Panc1 (cell line): ENCODE measurements at regions of chr2 and their contacts with region 1.

Region 1: DNA sequence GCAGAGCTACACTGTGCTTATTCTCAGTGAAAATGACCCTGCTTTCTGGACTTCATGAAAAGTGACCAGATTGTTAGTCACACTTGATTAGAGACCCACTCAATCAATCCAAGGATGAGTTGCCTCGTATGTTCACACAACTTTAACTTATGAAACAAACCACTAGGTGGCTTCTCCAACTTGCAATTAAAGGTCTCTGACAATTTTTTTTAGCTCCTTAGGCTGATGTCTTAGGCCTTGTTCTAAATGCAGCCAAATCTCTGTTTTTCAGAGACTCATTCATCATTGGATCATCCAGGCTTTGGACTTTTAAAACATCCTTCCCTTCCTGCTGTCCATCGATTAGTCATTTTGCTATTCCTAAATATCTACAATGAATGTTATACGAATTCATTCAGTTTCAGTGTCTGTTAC is 63.4 kb downstream of the MREG start:
- DNase-seq: no peak
- ATAC-seq: peak; percentile 93
- H3K4me3 ChIP-seq: no peak overlapping the region
- H3K27ac ChIP-seq: no peak overlapping the region
- H3K4me1 ChIP-seq: no peaks in the 10 kb centered on the region
- H3K27me3 ChIP-seq: no peaks in the 10 kb centered on the region
- CTCF ChIP-seq: peak; percentile 68; the same call in 1 of the 2 replicates

Region 2: DNA sequence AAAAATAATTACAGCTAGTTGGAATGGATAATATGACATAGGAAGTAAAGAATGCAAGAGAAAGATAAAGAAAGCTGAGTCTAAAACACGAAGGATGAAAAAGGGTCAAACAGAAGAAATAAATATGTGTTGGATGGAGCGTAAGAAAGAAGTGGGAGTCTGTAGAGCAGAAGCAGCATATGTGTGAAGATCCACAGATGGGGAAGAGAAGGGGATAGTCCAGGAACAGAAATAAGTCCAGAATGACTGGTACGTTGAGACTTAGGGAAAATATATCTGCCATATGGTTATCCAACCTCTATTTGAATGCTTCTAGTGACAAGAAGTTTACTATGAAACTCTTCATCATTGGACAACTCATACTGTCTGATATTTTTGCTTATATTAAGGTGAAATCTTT is 829.6 kb before region 1 on chr2:
- CTCF ChIA-PET with region 1: no interaction called
- POLR2A ChIA-PET with region 1: no interaction called
- in situ Hi-C with region 1: no loop called
- intact Hi-C with region 1: no loop called
- DNase-seq: no peak
- ATAC-seq: no peak
- H3K4me3 ChIP-seq: no peak overlapping the region
- H3K27ac ChIP-seq: no peak overlapping the region
- H3K4me1 ChIP-seq: no peaks in the 10 kb centered on the region
- H3K27me3 ChIP-seq: no peaks in the 10 kb centered on the region
- CTCF ChIP-seq: no peak

Region 3: GRCh38 chr2:215830304-215830703 is 119.7 kb before region 1 on chr2:
- CTCF ChIA-PET with region 1: no interaction called
- POLR2A ChIA-PET with region 1: no interaction called
- in situ Hi-C with region 1: no loop called
- intact Hi-C with region 1: no loop called
- DNase-seq: no peak
- ATAC-seq: no peak
- H3K4me3 ChIP-seq: no peak overlapping the region
- H3K27ac ChIP-seq: no peak overlapping the region
- H3K4me1 ChIP-seq: no peaks in the 10 kb centered on the region
- H3K27me3 ChIP-seq: no peaks in the 10 kb centered on the region; the same call in 1 of the 2 replicates
- CTCF ChIP-seq: no peak

Region 4: DNA sequence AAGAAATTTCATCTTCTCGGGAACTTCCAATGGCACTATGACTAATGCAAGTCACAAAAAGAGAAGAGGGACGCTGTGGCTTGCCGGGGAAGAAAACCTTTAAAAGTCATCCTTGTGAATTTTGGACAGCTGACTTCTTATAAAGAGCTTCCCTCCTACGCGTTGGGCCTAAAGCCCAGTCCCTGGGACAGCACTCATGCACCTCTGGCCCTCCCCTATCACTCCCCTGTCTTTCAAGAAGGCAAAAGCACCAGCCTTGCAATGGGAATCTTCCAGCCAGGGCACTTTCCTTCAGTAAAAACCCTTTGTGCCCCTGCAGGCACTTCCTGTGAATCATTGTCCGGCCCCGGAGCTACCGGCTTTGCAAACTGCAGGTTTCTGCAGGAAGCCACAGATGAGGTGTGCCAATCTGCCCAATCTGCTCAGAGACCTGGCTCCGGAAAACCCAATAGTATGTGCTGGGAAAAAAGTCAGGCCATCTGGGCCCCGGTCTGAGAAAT is 56.2 kb after region 1 on chr2:
- CTCF ChIA-PET with region 1: interaction called, 8 read pairs
- POLR2A ChIA-PET with region 1: interaction called, 5 read pairs
- in situ Hi-C with region 1: no loop called
- intact Hi-C with region 1: loop called (anchors 5 kb)
- DNase-seq: no peak
- ATAC-seq: peak; percentile 88
- H3K4me3 ChIP-seq: peak overlapping the region; percentile 14 to 48
- H3K27ac ChIP-seq: peak overlapping the region; percentile 86
- H3K4me1 ChIP-seq: peaks cover 27% of the 10 kb centered on the region
- H3K27me3 ChIP-seq: no peaks in the 10 kb centered on the region
- CTCF ChIP-seq: no peak

Region 5: DNA sequence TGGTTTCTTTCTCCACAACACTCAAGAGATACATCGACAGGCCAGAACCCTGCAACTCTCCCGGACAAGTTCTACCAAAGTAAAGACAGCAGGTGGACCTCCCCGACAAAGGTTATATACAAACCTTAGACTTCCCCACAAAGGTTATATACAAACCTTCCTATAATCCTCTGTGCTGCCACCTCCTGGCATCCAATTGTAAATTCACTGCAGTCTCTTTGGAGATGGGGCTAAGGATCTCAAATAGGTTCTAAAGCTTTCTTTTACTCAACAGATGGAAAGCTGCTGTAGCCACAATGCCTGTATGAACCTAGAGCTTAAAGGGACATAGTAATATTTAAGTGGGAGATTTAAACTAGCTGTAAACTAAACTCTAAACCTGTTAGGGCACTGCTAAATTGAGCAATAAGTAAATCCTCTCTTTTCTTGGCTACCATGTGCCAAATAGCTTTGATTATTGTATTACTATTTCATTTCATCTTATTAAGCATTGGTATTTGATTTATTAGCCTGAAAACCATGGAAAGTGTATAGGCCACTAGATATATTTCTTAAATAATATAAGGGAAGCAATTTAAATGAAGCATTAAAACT is 73.2 kb after region 1 on chr2:
- CTCF ChIA-PET with region 1: interaction called, 7 read pairs
- POLR2A ChIA-PET with region 1: no interaction called
- in situ Hi-C with region 1: no loop called
- intact Hi-C with region 1: loop called (anchors 1 kb)
- DNase-seq: no peak
- ATAC-seq: peak; percentile 91
- H3K4me3 ChIP-seq: no peak overlapping the region
- H3K27ac ChIP-seq: no peak overlapping the region
- H3K4me1 ChIP-seq: no peaks in the 10 kb centered on the region
- H3K27me3 ChIP-seq: no peaks in the 10 kb centered on the region
- CTCF ChIP-seq: peak; percentile 83

Region 6: GRCh38 chr2:216362730-216363129 is 412.7 kb after region 1 on chr2:
- CTCF ChIA-PET with region 1: no interaction called
- POLR2A ChIA-PET with region 1: no interaction called
- in situ Hi-C with region 1: no loop called
- intact Hi-C with region 1: no loop called
- DNase-seq: no peak
- ATAC-seq: no peak
- H3K4me3 ChIP-seq: no peak overlapping the region
- H3K27ac ChIP-seq: no peak overlapping the region
- H3K4me1 ChIP-seq: no peaks in the 10 kb centered on the region; the same call in 1 of the 2 replicates
- H3K27me3 ChIP-seq: peaks cover 2% of the 10 kb centered on the region; the same call in 1 of the 2 replicates
- CTCF ChIP-seq: no peak